ENCODE measurements at regions of chr1 and their contacts with region 1.

Region 1: GRCh38 chr1:54273092-54273794 is 73.3 kb downstream of the MRPL37 start:
- ATAC-seq: peak; percentile 79 to 96 (median 90)
- H3K4me3 ChIP-seq: peak overlapping the region in 3 of 5 donors; percentile 1 to 14 (median 1)
- H3K27ac ChIP-seq: peak overlapping the region; percentile 83 to 85
- H3K4me1 ChIP-seq: peaks cover 55 to 56% of the 10 kb centered on the region in 2 donors

Region 2: GRCh38 chr1:54361342-54361741 is 88.1 kb after region 1 on chr1:
- in situ Hi-C with region 1: no loop called
- ATAC-seq: peak in 5 of 8 experiments; percentile 33 to 68 (median 61)
- H3K4me3 ChIP-seq: no peak overlapping the region
- H3K27ac ChIP-seq: peak overlapping the region in 1 of 2 donors; percentile 3
- H3K4me1 ChIP-seq: peaks cover 49 to 60% of the 10 kb centered on the region in 2 donors

Region 3: DNA sequence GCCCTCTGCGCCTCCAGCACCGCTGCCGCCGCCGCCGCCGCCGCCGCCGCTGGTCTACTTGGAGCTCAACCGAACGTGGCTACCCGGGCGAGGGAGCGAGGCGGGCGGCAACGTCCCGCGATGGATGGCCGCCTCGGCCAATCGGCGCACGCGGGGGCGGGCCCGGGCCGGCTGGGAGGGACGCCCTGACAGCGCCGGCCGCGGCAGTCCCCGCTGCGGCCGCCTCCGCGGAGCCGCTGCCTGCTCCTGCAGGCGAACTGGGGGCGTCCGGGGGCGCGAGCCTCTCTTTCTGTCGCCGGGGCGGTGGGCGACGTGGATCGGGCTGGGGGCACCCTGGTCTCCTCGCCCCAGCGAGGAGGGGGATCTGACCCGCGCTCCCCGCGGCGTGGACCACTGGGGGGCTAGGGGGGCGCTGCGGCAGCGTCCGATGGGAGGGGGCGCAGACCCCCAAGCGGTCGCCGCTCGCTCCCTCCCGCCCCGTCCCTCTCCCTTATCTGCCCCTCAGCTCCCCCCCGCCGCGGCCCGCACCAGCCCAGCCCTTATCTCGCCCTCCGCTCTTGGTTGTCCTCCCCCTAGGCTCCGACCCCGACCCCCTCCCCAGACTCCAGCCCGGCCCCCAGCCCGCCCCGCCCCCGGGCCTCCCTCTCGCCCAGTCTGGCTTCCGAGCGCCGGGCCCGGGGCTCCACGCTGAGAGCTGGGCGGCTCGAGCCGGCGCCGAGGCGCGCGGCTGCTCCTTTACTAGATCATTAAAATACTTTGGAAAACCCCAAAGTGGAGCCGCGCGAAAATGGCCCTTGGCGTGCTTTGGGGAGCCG is 133.3 kb after region 1 on chr1 and contains the start of gene SSBP3:
- in situ Hi-C with region 1: loop called in 1 of 9 experiments (anchors 10 kb)
- ATAC-seq: peak; percentile 84 to 96 (median 88)
- H3K4me3 ChIP-seq: peak within 1 kb of the TSS; percentile 91 to 97 (median 92)
- H3K27ac ChIP-seq: peak within 1 kb of the TSS; percentile 93 to 96
- H3K4me1 ChIP-seq: peaks cover 56 to 59% of the 10 kb centered on the region in 2 donors
- total RNA-seq, gene SSBP3: 11.3 to 183 (median 60.4) TPM

Measured in motor neuron (in vitro differentiated cells).